H1 (cell line): ENCODE measurements at regions of chr1 and their contacts with region 1.

Region 1: DNA sequence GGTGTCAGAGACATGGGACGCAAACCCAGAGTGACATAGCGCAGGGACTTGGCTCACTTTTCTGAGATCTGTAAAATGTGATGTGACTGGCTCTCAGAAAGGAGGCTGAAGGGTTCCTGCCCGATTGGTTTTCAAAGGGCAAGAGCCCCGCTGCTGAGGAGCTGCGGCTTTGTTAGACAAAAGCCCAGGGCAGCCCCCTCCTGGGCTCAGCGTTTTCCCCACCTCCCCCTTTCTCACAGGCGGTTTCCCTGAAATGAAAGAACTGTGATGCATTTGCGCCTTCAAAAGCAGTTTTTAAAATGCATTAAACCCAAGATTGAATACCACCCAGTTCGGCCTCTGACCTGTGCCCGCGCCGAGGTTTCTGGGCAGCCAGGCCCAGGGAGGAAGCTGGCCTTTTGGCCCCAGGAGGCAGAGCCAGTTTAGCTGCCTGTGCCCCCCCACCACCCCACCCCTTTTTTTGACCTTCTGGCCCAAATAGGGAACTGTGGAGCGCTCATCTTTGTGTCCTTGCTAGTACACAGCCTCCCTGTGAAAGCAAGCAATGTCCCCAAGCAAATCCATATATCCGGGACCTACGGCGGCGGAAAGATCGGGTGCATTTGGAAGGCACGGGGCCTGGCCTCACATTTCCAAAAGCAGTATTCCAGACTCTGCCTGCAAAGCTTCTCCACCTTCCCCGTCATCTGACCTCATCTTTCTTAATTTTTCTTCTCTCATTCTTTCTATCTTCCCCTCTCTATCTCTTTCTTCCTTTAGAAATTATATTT is 28.6 kb downstream of the CD247 start:
- DNase-seq: peak; percentile 41 to 73
- H3K4me3 ChIP-seq: peak overlapping the region in 3 of 4 experiments; percentile 8 to 45 (median 12); a peak in 4 of 8 replicates
- H3K27ac ChIP-seq: peak overlapping the region; percentile 57
- H3K4me1 ChIP-seq: peaks cover 3 to 31% (median 18%) of the 10 kb centered on the region in 4 experiments
- H3K27me3 ChIP-seq: 0 out of 7 replicates have a peak, but pooled peaks cover 0 to 3% (median 0%) of the 10 kb centered on the region in 4 experiments
- CTCF ChIP-seq: no peak
- EP300 ChIP-seq: no peak; a peak in 1 of 3 replicates
- POLR2A ChIP-seq: no peak
- RAD21 ChIP-seq: 0 out of 4 replicates have a peak, but pooled peaks of 1 of the 2 experiments have one; percentile 3

Region 2: GRCh38 chr1:167472752-167473521 is 16.8 kb before region 1 on chr1:
- CTCF ChIA-PET with region 1: interaction called, 12 read pairs
- POLR2A ChIA-PET with region 1: interaction called, 3 read pairs
- DNase-seq: no peak
- H3K4me3 ChIP-seq: no peak overlapping the region
- H3K27ac ChIP-seq: no peak overlapping the region
- H3K4me1 ChIP-seq: peaks cover 0 to 4% (median under 1%) of the 10 kb centered on the region in 4 experiments; a peak in 2 of 7 replicates
- H3K27me3 ChIP-seq: no peaks in the 10 kb centered on the region
- CTCF ChIP-seq: no peak
- EP300 ChIP-seq: no peak
- POLR2A ChIP-seq: no peak
- RAD21 ChIP-seq: no peak

Region 3: DNA sequence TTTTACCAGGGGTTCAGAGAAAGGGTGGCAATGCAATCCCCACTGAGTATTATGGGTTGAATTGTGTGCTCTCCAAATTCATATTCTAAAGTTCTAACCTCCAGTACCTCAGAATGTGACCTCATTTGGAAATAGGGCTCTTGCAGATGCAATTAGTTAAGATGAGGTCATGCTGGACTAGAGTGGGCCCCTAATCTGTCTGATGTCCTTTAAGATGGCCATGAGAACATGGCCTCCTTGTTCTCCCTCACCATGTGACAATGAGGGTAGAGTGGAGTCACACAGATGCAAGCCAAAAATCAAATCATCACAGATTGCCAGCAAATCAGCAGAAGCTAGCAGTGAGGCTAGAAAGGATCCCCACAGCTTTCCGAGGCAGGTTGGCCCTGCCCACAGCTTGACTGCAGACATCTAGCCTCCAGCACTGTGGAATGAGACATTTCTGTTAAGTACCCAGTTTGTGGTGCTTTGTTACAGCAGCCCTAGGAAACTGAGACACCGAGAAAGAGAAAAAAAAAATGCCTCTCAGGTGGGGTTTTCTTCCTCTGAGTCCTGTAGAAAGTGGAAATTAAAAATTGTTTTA is 89.3 kb after region 1 on chr1:
- CTCF ChIA-PET with region 1: no interaction called
- POLR2A ChIA-PET with region 1: no interaction called
- DNase-seq: no peak
- H3K4me3 ChIP-seq: no peak overlapping the region
- H3K27ac ChIP-seq: no peak overlapping the region
- H3K4me1 ChIP-seq: no peaks in the 10 kb centered on the region
- H3K27me3 ChIP-seq: no peaks in the 10 kb centered on the region
- CTCF ChIP-seq: no peak
- EP300 ChIP-seq: no peak
- POLR2A ChIP-seq: no peak
- RAD21 ChIP-seq: no peak